Common myeloid progenitor, CD34-positive (primary cell): ENCODE measurements at regions of chr6 and their contacts with region 1.

Region 1: DNA sequence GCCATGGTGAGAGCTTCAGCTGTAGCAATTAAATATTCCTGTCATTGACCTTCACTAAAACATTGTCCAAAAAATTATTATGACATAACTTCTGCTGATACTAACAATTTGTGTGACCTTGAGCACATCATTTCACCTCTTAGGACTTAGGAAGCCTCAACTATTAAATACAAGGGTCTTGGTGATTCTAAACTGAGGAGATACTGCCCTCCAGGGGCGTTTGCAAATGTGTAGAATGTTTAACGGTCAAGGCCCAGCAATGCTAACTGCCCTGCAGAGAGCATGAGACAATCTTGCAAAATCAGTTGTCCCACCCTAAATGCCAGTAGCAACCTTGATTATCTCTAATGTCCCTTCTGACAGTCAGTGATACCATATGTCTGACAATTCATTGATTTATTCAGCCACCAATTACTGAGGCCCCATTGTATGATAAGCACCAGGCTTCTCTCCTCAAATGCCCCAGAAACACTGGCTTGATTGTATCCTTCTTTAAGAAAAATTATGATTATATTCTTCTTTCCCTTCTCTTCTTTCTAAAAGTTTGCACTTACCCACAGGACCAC is 284.1 kb upstream of the PLN start:
- DNase-seq: peak; percentile 25 to 52 (median 36)
- H3K4me3 ChIP-seq: no peak overlapping the region
- H3K27ac ChIP-seq: no peak overlapping the region
- H3K4me1 ChIP-seq: no peaks in the 10 kb centered on the region
- H3K27me3 ChIP-seq: no peaks in the 10 kb centered on the region

Region 2: DNA sequence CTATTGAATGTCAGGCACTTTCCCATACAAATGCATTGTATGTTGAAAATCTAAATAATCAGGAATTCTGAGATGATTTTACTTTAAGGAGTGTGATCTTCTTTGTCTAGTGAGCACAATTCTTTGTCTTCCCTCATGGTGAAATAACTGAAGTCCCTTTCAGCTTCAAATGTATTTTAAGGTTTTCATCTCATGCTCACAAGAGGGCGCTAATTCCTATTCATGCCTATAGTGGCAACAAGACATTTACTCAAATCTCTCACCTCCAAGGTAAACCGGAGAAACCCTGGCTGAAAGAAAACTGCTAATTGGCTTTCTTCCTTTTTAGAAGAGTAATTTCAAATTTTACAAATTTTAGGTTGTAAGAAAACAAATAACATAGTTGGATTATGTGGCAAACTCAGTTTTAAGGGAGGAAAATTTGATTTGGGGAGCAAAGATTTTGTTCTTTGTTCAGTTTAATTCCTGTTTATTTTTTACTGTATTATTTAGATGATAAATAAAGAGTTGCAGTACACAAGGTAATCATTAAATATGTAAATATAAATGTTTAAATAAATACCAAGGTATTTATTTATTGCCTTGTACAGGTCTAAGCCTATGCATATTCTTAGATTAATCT is 287.9 kb before region 1 on chr6:
- CTCF ChIA-PET with region 1: interaction called, 26 read pairs
- POLR2A ChIA-PET with region 1: no interaction called
- DNase-seq: peak; percentile 31 to 70 (median 66)
- H3K4me3 ChIP-seq: no peak overlapping the region
- H3K27ac ChIP-seq: no peak overlapping the region
- H3K4me1 ChIP-seq: no peaks in the 10 kb centered on the region
- H3K27me3 ChIP-seq: peaks cover 0 to 6% (median 4%) of the 10 kb centered on the region in 5 experiments

Region 3: DNA sequence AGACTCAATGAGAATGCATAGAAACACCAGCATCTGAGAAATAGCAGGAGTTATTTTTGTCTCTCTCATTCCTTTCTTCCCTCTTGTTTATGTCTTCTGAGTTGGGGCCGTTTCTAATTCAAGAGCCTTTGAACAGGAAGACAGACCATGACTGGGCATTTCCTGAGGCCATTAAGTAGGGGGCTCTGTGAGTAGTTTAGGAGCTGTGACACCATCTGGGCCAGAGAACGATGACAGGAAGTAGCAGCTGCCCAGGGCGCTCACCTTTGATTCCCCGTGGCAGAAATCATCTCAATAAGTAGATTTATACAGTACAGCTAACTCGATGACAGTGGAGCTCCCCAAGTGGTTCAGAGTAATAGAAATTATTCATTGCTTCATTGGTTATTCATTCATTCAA is 14.3 kb before region 1 on chr6:
- CTCF ChIA-PET with region 1: no interaction called
- POLR2A ChIA-PET with region 1: no interaction called
- DNase-seq: peak; percentile 4 to 72 (median 60)
- H3K4me3 ChIP-seq: peak overlapping the region in 2 of 7 experiments; percentile 19 to 42
- H3K27ac ChIP-seq: no peak overlapping the region
- H3K4me1 ChIP-seq: peaks cover 2 to 19% (median 10%) of the 10 kb centered on the region in 4 experiments
- H3K27me3 ChIP-seq: no peaks in the 10 kb centered on the region